Naive thymus-derived CD8-positive, alpha-beta T cell (primary cell): ENCODE measurements at regions of chr19 and their contacts with region 1.

Region 1: GRCh38 chr19:35937345-35938281 is 1.4 kb downstream of the LRFN3 start:
- DNase-seq: no peak
- ATAC-seq: peak; percentile 44 to 71
- H3K4me3 Mint-ChIP-seq: peak overlapping the region; percentile 73 to 96 (median 82)
- H3K27ac Mint-ChIP-seq: peak overlapping the region; percentile 33 to 92 (median 80)
- H3K4me1 Mint-ChIP-seq: peaks cover 23 to 52% (median 35%) of the 10 kb centered on the region in 4 donors
- H3K27me3 Mint-ChIP-seq: peaks cover 0 to 4% (median 0%) of the 10 kb centered on the region in 5 donors

Region 2: GRCh38 chr19:35959040-35959967 is 21.7 kb after region 1 on chr19:
- POLR2A ChIA-PET with region 1: interaction called, 12 read pairs
- DNase-seq: peak; percentile 69 to 88 (median 80)
- ATAC-seq: peak; percentile 97 to 98
- H3K4me3 Mint-ChIP-seq: peak overlapping the region; percentile 53 to 81 (median 70)
- H3K27ac Mint-ChIP-seq: peak overlapping the region in 2 of 10 donors; percentile 29 to 74
- H3K4me1 Mint-ChIP-seq: peaks cover 21 to 50% (median 36%) of the 10 kb centered on the region in 4 donors
- H3K27me3 Mint-ChIP-seq: peaks cover 0 to 8% (median 3%) of the 10 kb centered on the region in 5 donors